IMR-90 (cell line): ENCODE measurements at regions of chr2 and their contacts with region 1.

Region 1: DNA sequence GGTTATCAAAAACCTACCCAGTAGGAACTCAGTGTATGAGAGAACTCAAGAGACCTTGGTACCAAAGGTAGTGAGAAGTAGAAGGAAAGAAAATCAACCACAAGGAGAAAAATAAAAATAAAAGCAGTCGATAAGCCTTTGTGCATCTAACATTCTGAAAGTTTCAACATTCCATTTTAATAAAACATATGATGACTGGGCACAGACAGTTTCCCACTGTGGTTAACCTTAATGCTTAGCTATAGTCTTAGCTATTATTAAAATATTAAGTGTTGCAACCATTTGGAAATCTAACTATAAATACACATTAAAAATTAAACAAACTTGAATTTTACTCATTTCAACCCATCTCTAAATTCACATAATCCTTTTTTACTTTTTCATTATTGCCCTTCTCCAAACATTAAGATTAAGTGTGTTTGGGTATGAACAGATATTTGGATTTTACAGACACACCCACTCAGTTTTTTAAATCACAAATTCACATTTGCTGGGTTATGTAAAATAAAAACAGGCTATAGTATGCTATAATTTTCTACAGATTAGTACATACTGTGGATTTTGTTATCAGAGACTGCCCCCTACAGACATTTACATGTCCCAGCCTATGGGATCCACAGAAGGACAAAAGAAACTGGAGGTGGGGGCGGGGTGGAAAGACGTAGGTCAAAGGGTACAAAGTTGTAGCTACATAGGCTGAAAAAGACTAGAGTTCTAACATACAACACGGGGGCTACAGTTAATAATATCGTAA is 32.8 kb downstream of the SRBD1 start:
- DNase-seq: peak; percentile 59
- ATAC-seq: peak; percentile 90
- H3K4me3 ChIP-seq: no peak overlapping the region
- H3K27ac ChIP-seq: peak overlapping the region; percentile 55; the same call in 1 of the 2 replicates
- H3K4me1 ChIP-seq: peaks cover 4% of the 10 kb centered on the region; the same call in 1 of the 2 replicates
- H3K27me3 ChIP-seq: no peaks in the 10 kb centered on the region
- CTCF ChIP-seq: peak; percentile 61
- POLR2A ChIP-seq: no peak
- RAD21 ChIP-seq: peak; percentile 52

Region 2: DNA sequence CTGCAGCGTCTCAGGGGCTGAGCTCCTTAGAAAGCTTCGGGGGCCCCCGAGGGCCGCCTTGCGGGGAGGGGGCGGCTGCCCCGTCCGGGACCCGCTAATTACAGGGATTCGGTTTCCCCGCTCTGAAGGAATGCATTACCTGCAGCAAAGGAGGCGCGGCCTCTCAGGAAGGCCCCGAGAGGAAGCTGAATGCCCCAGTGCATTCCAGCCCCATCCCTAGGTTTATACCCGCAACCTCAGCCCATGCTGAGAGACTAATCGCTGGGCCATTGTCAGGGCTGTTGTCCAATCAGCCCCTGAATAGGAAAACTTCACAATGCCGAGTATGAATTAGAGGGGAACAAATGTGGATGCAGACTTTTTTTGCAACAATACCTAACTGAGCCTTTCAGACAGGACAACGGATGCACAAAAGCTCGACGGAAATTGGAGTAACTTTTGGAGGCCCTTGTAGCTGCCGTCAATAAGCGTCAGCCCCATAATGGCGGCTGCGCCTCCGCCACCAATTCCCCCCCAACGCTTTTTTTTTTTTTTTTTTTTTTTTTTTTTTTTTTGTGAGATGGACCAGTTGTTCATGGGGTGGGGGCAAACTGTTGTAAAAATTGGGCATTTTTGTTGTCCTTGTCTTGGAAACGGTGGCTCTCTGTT is 775.3 kb before region 1 on chr2:
- CTCF ChIA-PET with region 1: no interaction called
- POLR2A ChIA-PET with region 1: no interaction called
- dilution Hi-C with region 1: no loop called
- in situ Hi-C with region 1: no loop called
- intact Hi-C with region 1: no loop called
- DNase-seq: no peak
- ATAC-seq: no peak
- H3K4me3 ChIP-seq: no peak overlapping the region
- H3K27ac ChIP-seq: no peak overlapping the region
- H3K4me1 ChIP-seq: no peaks in the 10 kb centered on the region
- H3K27me3 ChIP-seq: peaks cover 73% of the 10 kb centered on the region
- CTCF ChIP-seq: no peak
- POLR2A ChIP-seq: no peak
- RAD21 ChIP-seq: no peak

Region 3: DNA sequence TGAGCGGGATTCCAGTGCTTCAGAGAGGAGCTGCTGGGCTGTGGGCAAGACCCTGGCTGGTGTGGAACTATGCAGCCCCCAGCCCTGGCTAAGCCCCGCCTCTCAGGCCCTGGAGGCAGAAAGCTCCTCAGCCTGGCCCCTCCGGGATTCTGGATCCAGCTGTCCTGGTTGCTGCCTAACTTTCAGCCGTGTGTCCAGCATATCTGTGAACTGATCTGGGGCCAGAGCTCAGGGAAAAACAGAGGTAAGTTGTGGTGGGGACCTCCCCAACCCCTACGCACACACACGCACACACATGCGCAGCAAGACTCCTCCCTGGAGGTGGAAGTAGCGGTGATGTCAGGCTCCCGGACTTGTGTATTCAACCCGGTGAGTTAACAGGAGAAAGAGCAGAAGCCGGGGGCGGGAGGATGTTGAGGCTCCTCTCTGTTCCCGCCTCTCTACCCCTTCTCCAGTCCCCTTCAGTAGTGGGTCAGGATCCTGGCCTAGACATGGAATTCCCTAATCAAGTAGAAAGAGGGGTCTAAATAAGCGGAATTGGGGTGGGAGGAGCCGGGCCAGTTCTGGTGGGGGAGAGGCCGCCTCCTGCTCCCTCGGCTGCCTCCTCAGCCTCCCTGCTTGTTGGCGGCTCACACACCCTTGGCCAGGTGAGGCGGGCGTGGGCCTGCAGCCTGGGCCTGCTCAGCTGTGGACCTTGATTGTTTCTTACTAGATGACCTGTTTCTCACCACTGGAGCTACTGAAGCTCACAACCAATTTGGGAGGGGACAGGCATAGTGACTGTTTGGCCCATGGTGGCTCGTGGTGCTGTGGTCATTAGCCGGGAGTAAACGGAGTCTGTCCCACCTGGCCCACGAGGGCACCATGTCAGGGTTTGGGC is 602.4 kb before region 1 on chr2:
- CTCF ChIA-PET with region 1: no interaction called
- POLR2A ChIA-PET with region 1: no interaction called
- dilution Hi-C with region 1: no loop called
- in situ Hi-C with region 1: loop called (anchors 5 kb)
- intact Hi-C with region 1: loop called (anchors 1 kb)
- DNase-seq: no peak
- ATAC-seq: no peak
- H3K4me3 ChIP-seq: no peak overlapping the region
- H3K27ac ChIP-seq: no peak overlapping the region
- H3K4me1 ChIP-seq: no peaks in the 10 kb centered on the region
- H3K27me3 ChIP-seq: peaks cover 46% of the 10 kb centered on the region
- CTCF ChIP-seq: no peak
- POLR2A ChIP-seq: no peak
- RAD21 ChIP-seq: no peak

Region 4: DNA sequence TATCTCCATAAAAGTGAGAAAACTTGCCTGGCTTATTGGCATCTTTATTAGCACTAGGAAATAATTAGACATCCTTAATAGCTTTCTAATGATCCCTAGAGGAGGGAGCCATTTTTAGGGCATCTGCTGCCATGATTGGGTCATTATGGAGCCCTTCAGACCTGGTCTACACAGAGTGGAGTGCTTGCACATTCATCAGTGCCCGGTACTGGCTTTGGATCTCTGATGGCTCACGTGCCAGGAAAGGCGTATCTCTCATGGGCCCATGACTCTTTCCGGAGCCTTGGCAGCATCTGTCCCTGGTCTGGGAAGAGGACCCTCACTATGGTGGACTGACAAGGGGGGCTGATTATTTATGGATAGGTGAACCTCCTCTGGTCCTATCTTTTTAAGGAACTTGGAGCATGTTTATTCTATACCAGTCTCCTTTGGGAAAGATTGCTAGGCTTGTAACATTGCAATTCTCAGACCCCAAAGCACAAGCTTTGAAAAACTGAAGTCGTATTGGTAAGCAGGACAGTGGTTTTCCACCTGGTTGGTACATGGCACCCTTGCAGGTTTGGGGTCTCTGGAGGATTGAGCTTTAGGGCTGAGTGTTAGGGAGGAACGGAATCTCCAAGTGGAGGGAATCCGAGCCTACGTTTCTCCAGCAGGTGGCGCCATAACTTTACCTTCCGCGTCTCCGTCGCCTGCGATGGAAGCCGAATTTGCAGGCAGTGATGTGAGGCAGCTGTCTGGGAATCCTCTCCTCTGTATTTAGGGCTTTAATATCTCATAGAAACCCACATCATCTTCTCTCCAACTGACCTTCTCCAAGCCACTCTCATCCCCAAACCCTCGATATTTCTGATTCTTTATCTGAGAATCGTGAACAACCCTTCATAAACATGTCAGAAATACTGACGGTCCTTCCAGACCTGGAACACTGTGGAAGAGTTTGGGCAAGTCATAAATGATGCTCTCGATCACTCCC is 596.8 kb before region 1 on chr2:
- CTCF ChIA-PET with region 1: interaction called, 4 read pairs
- POLR2A ChIA-PET with region 1: no interaction called
- dilution Hi-C with region 1: no loop called
- in situ Hi-C with region 1: loop called (anchors 5 kb)
- intact Hi-C with region 1: loop called (anchors 1 kb)
- DNase-seq: peak; percentile 73
- ATAC-seq: peak; percentile 92
- H3K4me3 ChIP-seq: no peak overlapping the region
- H3K27ac ChIP-seq: no peak overlapping the region
- H3K4me1 ChIP-seq: no peaks in the 10 kb centered on the region
- H3K27me3 ChIP-seq: peaks cover 28% of the 10 kb centered on the region
- CTCF ChIP-seq: peak; percentile 88
- POLR2A ChIP-seq: 0 out of 2 replicates have a peak, but pooled peaks have one; percentile 33
- RAD21 ChIP-seq: peak; percentile 97

Region 5: DNA sequence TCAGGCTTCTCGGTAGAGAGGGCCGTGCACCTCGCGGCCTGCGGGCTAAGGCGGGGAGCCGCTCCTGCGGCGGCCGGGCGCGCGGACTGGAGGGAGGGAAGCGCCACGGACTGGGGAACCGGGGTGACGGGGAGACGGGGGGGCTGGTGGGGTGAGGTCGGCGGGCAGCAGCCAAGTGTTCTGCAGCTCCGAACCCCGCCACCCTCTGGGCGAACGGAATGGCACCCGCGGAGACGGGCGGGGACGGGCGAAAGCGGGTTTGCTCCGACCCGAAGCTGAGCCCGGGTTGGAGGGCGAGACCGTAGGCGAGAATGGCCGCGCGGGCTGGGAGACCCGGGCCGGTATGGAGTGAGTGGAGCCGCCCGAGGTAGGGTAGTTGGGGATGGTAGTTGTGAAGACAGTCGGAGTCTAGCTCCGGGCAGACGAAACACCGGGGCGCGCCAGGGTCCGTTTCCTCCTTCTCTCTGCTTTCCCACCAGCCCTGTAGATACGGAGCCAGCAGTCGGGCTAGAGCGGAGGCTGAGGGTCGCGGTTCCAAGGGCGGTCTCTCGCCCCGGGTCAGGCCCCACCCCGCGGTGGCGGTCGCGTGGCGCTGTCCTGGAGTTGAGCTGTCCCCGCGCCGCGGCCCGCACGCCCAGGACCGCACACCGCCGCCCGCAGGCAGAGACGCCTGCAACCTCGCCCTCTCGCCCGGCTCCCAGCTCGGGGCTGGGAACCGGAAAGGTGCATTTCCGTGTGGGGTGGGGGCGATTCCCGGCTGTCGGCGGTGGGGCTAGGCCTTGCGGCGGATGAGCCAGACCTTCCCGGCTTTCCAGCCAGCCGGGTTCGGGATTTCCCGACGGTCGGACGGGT is 408.7 kb before region 1 on chr2:
- CTCF ChIA-PET with region 1: no interaction called
- POLR2A ChIA-PET with region 1: no interaction called
- dilution Hi-C with region 1: no loop called
- in situ Hi-C with region 1: no loop called
- intact Hi-C with region 1: loop called (anchors 10 kb)
- DNase-seq: no peak
- ATAC-seq: peak; percentile 55
- H3K4me3 ChIP-seq: peak overlapping the region; percentile 28
- H3K27ac ChIP-seq: no peak overlapping the region
- H3K4me1 ChIP-seq: no peaks in the 10 kb centered on the region; the same call in 1 of the 2 replicates
- H3K27me3 ChIP-seq: peaks cover 60% of the 10 kb centered on the region
- CTCF ChIP-seq: no peak
- POLR2A ChIP-seq: no peak
- RAD21 ChIP-seq: no peak

Region 6: GRCh38 chr2:45224321-45224992 is 353.8 kb before region 1 on chr2:
- CTCF ChIA-PET with region 1: no interaction called
- POLR2A ChIA-PET with region 1: no interaction called
- dilution Hi-C with region 1: no loop called
- in situ Hi-C with region 1: no loop called
- intact Hi-C with region 1: no loop called
- DNase-seq: no peak
- ATAC-seq: no peak
- H3K4me3 ChIP-seq: no peak overlapping the region
- H3K27ac ChIP-seq: no peak overlapping the region
- H3K4me1 ChIP-seq: no peaks in the 10 kb centered on the region
- H3K27me3 ChIP-seq: peaks cover 45% of the 10 kb centered on the region
- CTCF ChIP-seq: no peak
- POLR2A ChIP-seq: no peak
- RAD21 ChIP-seq: no peak

Region 7: DNA sequence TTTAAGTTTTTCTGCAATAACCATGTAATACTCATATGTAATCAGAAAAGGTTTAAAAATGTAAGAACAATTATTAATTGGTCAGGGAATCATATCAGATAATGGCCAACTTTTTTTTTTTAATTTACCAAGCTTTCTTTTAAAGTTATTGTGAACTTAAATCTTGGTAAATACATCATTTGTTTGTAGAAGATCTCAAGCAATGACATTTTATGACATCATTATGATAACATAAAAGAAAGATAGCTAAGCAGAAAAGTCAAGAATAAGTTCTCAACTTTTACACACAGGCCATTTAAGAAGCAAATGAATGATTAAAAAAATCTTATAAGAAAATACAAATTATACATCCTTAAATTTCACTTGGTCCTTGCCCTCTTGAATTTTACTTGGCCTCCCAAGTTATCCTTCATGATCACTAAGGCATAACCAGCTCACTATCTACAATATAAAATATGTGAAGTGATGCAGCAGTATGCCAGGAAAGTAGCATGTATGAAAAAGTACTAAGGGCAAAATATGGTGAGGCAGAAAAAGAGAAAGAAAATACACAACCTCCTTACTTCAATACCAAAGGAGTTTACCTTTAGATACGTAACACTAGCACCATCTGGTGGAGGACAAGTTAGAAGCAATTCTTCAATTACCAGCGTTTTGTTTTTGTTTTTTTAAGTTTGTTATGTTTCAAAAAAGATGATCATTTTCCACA is 83.8 kb before region 1 on chr2:
- CTCF ChIA-PET with region 1: interaction called, 3 read pairs
- POLR2A ChIA-PET with region 1: no interaction called
- dilution Hi-C with region 1: no loop called
- in situ Hi-C with region 1: no loop called
- intact Hi-C with region 1: loop called (anchors 1 kb)
- DNase-seq: peak; percentile 79
- ATAC-seq: peak; percentile 62; the same call in 1 of the 2 replicates
- H3K4me3 ChIP-seq: no peak overlapping the region
- H3K27ac ChIP-seq: no peak overlapping the region
- H3K4me1 ChIP-seq: no peaks in the 10 kb centered on the region; the same call in 1 of the 2 replicates
- H3K27me3 ChIP-seq: no peaks in the 10 kb centered on the region
- CTCF ChIP-seq: peak; percentile 93
- POLR2A ChIP-seq: no peak
- RAD21 ChIP-seq: peak; percentile 89

Region 8: DNA sequence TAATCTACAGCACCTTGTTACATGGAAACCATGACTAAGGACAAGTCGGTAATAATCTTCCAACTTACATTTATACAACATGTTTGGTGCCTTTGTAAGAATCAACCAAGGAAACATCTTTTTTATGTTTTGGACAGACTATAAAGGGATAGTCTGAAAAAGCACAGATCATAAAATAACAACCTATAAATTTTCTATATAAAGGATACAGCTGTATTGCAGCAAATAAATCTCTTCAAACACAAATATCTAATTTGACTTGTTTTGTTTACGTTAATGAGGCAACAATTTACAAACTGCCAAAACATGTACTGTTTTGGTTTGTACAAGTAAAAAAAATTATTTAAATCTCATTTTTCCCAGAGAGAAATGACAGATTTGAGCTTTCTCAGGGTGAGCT is 59.7 kb before region 1 on chr2:
- CTCF ChIA-PET with region 1: no interaction called
- POLR2A ChIA-PET with region 1: no interaction called
- dilution Hi-C with region 1: no loop called
- in situ Hi-C with region 1: no loop called
- intact Hi-C with region 1: no loop called
- DNase-seq: no peak
- ATAC-seq: no peak
- H3K4me3 ChIP-seq: no peak overlapping the region
- H3K27ac ChIP-seq: no peak overlapping the region
- H3K4me1 ChIP-seq: no peaks in the 10 kb centered on the region
- H3K27me3 ChIP-seq: no peaks in the 10 kb centered on the region
- CTCF ChIP-seq: no peak
- POLR2A ChIP-seq: no peak
- RAD21 ChIP-seq: no peak

Region 9: GRCh38 chr2:46706264-46706983 is 1128.2 kb after region 1 on chr2:
- CTCF ChIA-PET with region 1: no interaction called
- POLR2A ChIA-PET with region 1: no interaction called
- dilution Hi-C with region 1: no loop called
- in situ Hi-C with region 1: no loop called
- intact Hi-C with region 1: no loop called
- DNase-seq: peak; percentile 42
- ATAC-seq: peak; percentile 68
- H3K4me3 ChIP-seq: no peak overlapping the region
- H3K27ac ChIP-seq: no peak overlapping the region
- H3K4me1 ChIP-seq: peaks cover 10% of the 10 kb centered on the region
- H3K27me3 ChIP-seq: no peaks in the 10 kb centered on the region
- CTCF ChIP-seq: no peak
- POLR2A ChIP-seq: no peak
- RAD21 ChIP-seq: no peak